ENCODE measurements at regions of chr16 and their contacts with region 1.

Region 1: GRCh38 chr16:68590201-68590994 is 51.3 kb downstream of the ZFP90 start:
- DNase-seq: peak; percentile 38
- H3K4me3 Mint-ChIP-seq: no peak overlapping the region
- H3K27ac Mint-ChIP-seq: no peak overlapping the region
- H3K4me1 Mint-ChIP-seq: no peaks in the 10 kb centered on the region
- H3K27me3 Mint-ChIP-seq: no peaks in the 10 kb centered on the region

Region 2: GRCh38 chr16:68719993-68720489 is 129.6 kb after region 1 on chr16:
- intact Hi-C with region 1: no loop called
- DNase-seq: peak; percentile 7
- H3K4me3 Mint-ChIP-seq: no peak overlapping the region
- H3K27ac Mint-ChIP-seq: peak overlapping the region; percentile 45
- H3K4me1 Mint-ChIP-seq: peaks cover 18% of the 10 kb centered on the region
- H3K27me3 Mint-ChIP-seq: no peaks in the 10 kb centered on the region

Region 3: DNA sequence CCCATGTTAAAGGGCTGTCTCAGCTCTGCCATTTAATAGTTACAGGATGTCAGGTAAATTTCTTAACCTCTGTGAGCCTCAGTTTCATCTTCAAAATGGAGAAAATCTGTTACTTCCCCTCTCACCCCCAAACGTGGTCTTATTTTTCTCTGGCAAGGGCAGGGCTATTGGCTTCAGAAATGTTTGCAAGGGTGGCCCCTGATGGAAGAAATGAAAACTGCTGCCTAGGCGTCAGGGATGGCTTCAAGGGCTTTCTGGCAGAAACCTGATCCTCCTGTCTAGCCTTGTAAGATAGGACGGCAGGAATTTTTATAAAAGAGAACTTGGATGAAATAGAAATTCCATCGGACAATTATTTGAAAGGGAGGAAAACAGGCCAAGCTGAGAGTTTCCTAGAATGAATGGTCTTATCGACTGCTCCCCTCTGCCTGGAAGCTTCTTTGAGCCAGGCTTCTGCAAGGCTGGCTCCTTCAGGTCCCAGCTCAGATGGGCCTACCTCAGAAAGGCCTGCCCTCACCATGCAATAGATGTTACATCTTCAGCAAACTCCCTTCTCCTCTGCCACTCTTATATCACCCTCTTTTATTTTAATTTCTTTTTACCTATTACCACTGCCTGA is 210.0 kb after region 1 on chr16:
- intact Hi-C with region 1: loop called (anchors 10 kb)
- DNase-seq: peak; percentile 48
- H3K4me3 Mint-ChIP-seq: no peak overlapping the region
- H3K27ac Mint-ChIP-seq: no peak overlapping the region
- H3K4me1 Mint-ChIP-seq: peaks cover 4% of the 10 kb centered on the region
- H3K27me3 Mint-ChIP-seq: peaks cover 2% of the 10 kb centered on the region